ENCODE measurements at regions of chr5 and their contacts with region 1.

Region 1: DNA sequence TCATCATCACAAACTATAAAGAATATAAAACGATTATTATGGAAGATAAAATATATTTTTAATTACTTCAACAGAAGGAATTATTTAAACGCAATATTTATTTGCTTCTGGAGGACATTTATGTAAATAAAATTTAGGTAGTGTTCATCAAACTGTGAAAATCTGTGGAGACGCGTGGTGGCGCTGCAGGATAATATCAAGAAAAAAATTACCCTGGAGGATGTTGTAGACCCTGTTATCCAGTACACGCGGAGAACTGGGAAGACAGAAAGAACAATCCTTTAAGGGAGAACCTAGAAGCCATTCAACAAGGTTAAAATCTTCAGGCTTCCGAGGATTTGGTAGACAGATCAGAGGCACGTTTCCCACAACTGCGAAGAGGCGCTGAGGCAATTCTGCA is at the start of gene PCDHB12:
- DNase-seq: peak; percentile 54
- ATAC-seq: peak; percentile 73
- H3K4me3 Mint-ChIP-seq: peak within 1 kb of the TSS; percentile 72
- H3K27ac Mint-ChIP-seq: no peak within 1 kb of the TSS
- H3K4me1 Mint-ChIP-seq: peaks cover 4% of the 10 kb centered on the region
- H3K27me3 Mint-ChIP-seq: peaks cover 3% of the 10 kb centered on the region
- CTCF ChIP-seq: 0 out of 2 replicates have a peak, but pooled peaks have one; percentile 27
- total RNA-seq, gene PCDHB12: 2.7 to 3.1 TPM (median 3.1 TPM) in 3 replicates

Region 2: GRCh38 chr5:141172378-141173204 is 35.9 kb before region 1 on chr5 and contains the start of gene PCDHB7:
- CTCF ChIA-PET with region 1: interaction called, 10 read pairs
- POLR2A ChIA-PET with region 1: no interaction called
- DNase-seq: peak; percentile 57
- ATAC-seq: no peak
- H3K4me3 Mint-ChIP-seq: no peak within 1 kb of the TSS
- H3K27ac Mint-ChIP-seq: no peak within 1 kb of the TSS
- H3K4me1 Mint-ChIP-seq: no peaks in the 10 kb centered on the region
- H3K27me3 Mint-ChIP-seq: peaks cover 3% of the 10 kb centered on the region; the same call in 1 of the 2 replicates
- CTCF ChIP-seq: peak; percentile 66
- total RNA-seq, gene PCDHB7: 0.17 to 0.27 TPM (median 0.23 TPM) in 3 replicates

Region 3: GRCh38 chr5:141496038-141496437 is 287.6 kb after region 1 on chr5:
- CTCF ChIA-PET with region 1: no interaction called
- POLR2A ChIA-PET with region 1: no interaction called
- DNase-seq: peak; percentile 54
- ATAC-seq: peak; percentile 42
- H3K4me3 Mint-ChIP-seq: no peak overlapping the region; the same call in 1 of the 2 replicates
- H3K27ac Mint-ChIP-seq: peak overlapping the region; percentile 13
- H3K4me1 Mint-ChIP-seq: peaks cover 41% of the 10 kb centered on the region
- H3K27me3 Mint-ChIP-seq: peaks cover 32% of the 10 kb centered on the region
- CTCF ChIP-seq: no peak